ENCODE measurements at regions of chr20 and their contacts with region 1.

Region 1: DNA sequence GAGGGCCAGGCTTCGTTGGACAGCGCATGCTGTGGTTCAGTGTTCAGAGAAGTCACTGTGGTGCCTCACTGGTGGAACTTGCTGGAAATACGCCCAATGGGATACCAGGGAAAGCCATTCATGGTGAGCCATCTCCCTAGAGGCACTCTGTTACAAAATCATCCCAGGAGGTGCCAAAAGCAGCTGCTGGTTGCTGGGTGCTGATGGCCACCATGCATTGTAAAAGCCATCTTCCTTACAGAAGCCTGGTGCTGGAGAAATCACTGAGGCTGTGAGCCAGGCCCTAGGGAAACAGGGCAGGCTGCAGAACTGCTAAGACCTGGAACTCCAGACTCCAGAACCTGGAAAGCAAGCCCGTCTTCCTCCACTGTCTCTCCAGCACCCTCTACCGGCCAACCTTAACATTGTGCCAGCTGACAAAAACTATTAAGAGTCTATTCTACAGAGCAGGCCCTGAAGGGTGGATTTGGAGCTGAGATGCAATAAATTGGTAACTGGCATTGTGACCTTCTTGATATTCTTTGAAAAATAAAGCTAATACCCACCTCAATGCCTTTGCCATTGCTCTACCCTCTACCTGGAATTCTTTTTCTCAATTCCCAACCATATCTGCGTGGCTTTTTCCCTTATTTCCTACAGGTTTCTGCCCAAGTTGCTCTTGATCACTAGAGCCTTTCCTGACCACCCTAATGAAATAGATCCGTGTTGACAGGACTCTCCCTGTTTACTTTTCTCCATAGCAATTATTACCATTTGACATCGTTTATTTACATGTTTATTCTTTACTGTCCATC is 18.5 kb downstream of the SNRPB start:
- DNase-seq: peak; percentile 53 to 68 (median 61)
- ATAC-seq: peak; percentile 85
- H3K4me3 ChIP-seq: no peak overlapping the region
- H3K27ac ChIP-seq: no peak overlapping the region
- H3K4me1 ChIP-seq: no peaks in the 10 kb centered on the region
- H3K27me3 ChIP-seq: peaks cover 0 to 5% of the 10 kb centered on the region in 2 experiments; a peak in 1 of 5 replicates
- CTCF ChIP-seq: peak; percentile 77 to 80 (median 78)
- EP300 ChIP-seq: no peak
- POLR2A ChIP-seq: no peak
- RAD21 ChIP-seq: peak in 1 of 2 experiments; percentile 65; a peak in 2 of 4 replicates

Region 2: GRCh38 chr20:1764136-1765033 is 687.8 kb before region 1 on chr20:
- CTCF ChIA-PET with region 1: interaction called, 3 read pairs
- POLR2A ChIA-PET with region 1: no interaction called
- in situ Hi-C with region 1: no loop called
- intact Hi-C with region 1: loop called (anchors 5 kb)
- DNase-seq: peak; percentile 29 to 65 (median 44)
- ATAC-seq: peak; percentile 91
- H3K4me3 ChIP-seq: no peak overlapping the region
- H3K27ac ChIP-seq: no peak overlapping the region
- H3K4me1 ChIP-seq: no peaks in the 10 kb centered on the region
- H3K27me3 ChIP-seq: no peaks in the 10 kb centered on the region; a peak in 1 of 5 replicates
- CTCF ChIP-seq: peak; percentile 67 to 72 (median 67)
- EP300 ChIP-seq: no peak
- POLR2A ChIP-seq: no peak
- RAD21 ChIP-seq: peak; percentile 54 to 64

Region 3: GRCh38 chr20:1965520-1966351 is 486.4 kb before region 1 on chr20:
- CTCF ChIA-PET with region 1: interaction called, 3 read pairs
- POLR2A ChIA-PET with region 1: no interaction called
- in situ Hi-C with region 1: no loop called
- intact Hi-C with region 1: loop called (anchors 5 kb)
- DNase-seq: peak; percentile 69 to 80 (median 78)
- ATAC-seq: peak; percentile 92
- H3K4me3 ChIP-seq: no peak overlapping the region
- H3K27ac ChIP-seq: no peak overlapping the region
- H3K4me1 ChIP-seq: peaks cover 0 to 3% of the 10 kb centered on the region in 2 experiments; a peak in 1 of 5 replicates
- H3K27me3 ChIP-seq: no peaks in the 10 kb centered on the region; a peak in 2 of 5 replicates
- CTCF ChIP-seq: peak; percentile 78 to 92 (median 80)
- EP300 ChIP-seq: no peak
- POLR2A ChIP-seq: no peak
- RAD21 ChIP-seq: peak; percentile 61 to 84

Region 4: GRCh38 chr20:2206957-2207769 is 245.0 kb before region 1 on chr20:
- CTCF ChIA-PET with region 1: interaction called, 6 read pairs
- POLR2A ChIA-PET with region 1: no interaction called
- in situ Hi-C with region 1: loop called (anchors 10 kb)
- intact Hi-C with region 1: loop called (anchors 5 kb)
- DNase-seq: peak; percentile 34 to 62 (median 38)
- ATAC-seq: peak; percentile 94
- H3K4me3 ChIP-seq: no peak overlapping the region
- H3K27ac ChIP-seq: no peak overlapping the region
- H3K4me1 ChIP-seq: peaks cover 0 to 12% of the 10 kb centered on the region in 2 experiments; a peak in 2 of 5 replicates
- H3K27me3 ChIP-seq: peaks cover 4 to 26% of the 10 kb centered on the region in 2 experiments; a peak in 4 of 5 replicates
- CTCF ChIP-seq: peak; percentile 54 to 73 (median 65); a peak in 5 of 6 replicates
- EP300 ChIP-seq: no peak
- POLR2A ChIP-seq: no peak
- RAD21 ChIP-seq: peak; percentile 81 to 84

Region 5: GRCh38 chr20:2301164-2301622 is 150.9 kb before region 1 on chr20:
- CTCF ChIA-PET with region 1: no interaction called
- POLR2A ChIA-PET with region 1: no interaction called
- in situ Hi-C with region 1: no loop called
- intact Hi-C with region 1: no loop called
- DNase-seq: peak; percentile 28 to 53 (median 34)
- ATAC-seq: peak; percentile 58
- H3K4me3 ChIP-seq: no peak overlapping the region
- H3K27ac ChIP-seq: no peak overlapping the region
- H3K4me1 ChIP-seq: peaks cover 0 to 9% of the 10 kb centered on the region in 2 experiments; a peak in 3 of 5 replicates
- H3K27me3 ChIP-seq: peaks cover 0 to 7% of the 10 kb centered on the region in 2 experiments; a peak in 1 of 5 replicates
- CTCF ChIP-seq: no peak
- EP300 ChIP-seq: no peak
- POLR2A ChIP-seq: no peak
- RAD21 ChIP-seq: no peak

Region 6: GRCh38 chr20:2349818-2350508 is 102.2 kb before region 1 on chr20:
- CTCF ChIA-PET with region 1: no interaction called
- POLR2A ChIA-PET with region 1: no interaction called
- in situ Hi-C with region 1: no loop called
- intact Hi-C with region 1: loop called (anchors 2 kb)
- DNase-seq: no peak
- ATAC-seq: no peak
- H3K4me3 ChIP-seq: no peak overlapping the region
- H3K27ac ChIP-seq: no peak overlapping the region
- H3K4me1 ChIP-seq: no peaks in the 10 kb centered on the region; a peak in 2 of 5 replicates
- H3K27me3 ChIP-seq: no peaks in the 10 kb centered on the region; a peak in 1 of 5 replicates
- CTCF ChIP-seq: no peak
- EP300 ChIP-seq: no peak
- POLR2A ChIP-seq: no peak
- RAD21 ChIP-seq: no peak

Region 7: GRCh38 chr20:2387180-2387577 is 65.0 kb before region 1 on chr20:
- CTCF ChIA-PET with region 1: interaction called, 6 read pairs
- POLR2A ChIA-PET with region 1: no interaction called
- in situ Hi-C with region 1: no loop called
- intact Hi-C with region 1: loop called (anchors 2 kb)
- DNase-seq: peak; percentile 55 to 63 (median 57)
- ATAC-seq: peak; percentile 88
- H3K4me3 ChIP-seq: no peak overlapping the region
- H3K27ac ChIP-seq: no peak overlapping the region
- H3K4me1 ChIP-seq: no peaks in the 10 kb centered on the region
- H3K27me3 ChIP-seq: peaks cover 2 to 22% of the 10 kb centered on the region in 2 experiments; a peak in 3 of 5 replicates
- CTCF ChIP-seq: peak; percentile 69 to 74 (median 72)
- EP300 ChIP-seq: no peak
- POLR2A ChIP-seq: no peak
- RAD21 ChIP-seq: peak; percentile 27 to 60; a peak in 3 of 4 replicates

Region 8: DNA sequence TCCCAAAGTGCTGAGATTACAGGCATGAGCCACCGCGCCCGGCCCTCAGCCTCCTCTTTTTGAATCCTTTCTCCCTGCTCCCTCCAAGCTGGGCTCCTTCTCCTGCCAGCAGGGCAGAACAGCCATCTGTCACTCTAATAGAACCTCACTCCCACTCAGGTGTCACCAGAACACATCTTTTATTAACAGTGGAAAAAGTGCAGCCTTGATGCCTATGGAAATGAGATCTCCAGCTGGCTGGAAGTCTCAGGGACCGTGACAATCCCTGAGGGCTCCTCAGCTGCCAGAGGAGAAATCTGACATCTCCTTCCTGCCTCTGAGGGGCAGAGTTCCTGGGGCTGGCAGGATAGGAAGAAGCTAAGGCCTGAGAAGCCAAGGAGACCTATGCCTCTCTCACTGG is 112.3 kb after region 1 on chr20:
- CTCF ChIA-PET with region 1: no interaction called
- POLR2A ChIA-PET with region 1: no interaction called
- in situ Hi-C with region 1: no loop called
- intact Hi-C with region 1: no loop called
- DNase-seq: no peak
- ATAC-seq: no peak
- H3K4me3 ChIP-seq: no peak overlapping the region
- H3K27ac ChIP-seq: no peak overlapping the region
- H3K4me1 ChIP-seq: no peaks in the 10 kb centered on the region
- H3K27me3 ChIP-seq: peaks cover 8 to 36% of the 10 kb centered on the region in 2 experiments
- CTCF ChIP-seq: no peak
- EP300 ChIP-seq: no peak
- POLR2A ChIP-seq: no peak
- RAD21 ChIP-seq: no peak